Right ventricle myocardium inferior (tissue), 1 donor: ENCODE measurements at regions of chr11 and their contacts with region 1.

Region 1: GRCh38 chr11:88421530-88421929 is 84.0 kb upstream of the CTSC start:
- DNase-seq: no peak
- ATAC-seq: peak; percentile 47

Region 2: DNA sequence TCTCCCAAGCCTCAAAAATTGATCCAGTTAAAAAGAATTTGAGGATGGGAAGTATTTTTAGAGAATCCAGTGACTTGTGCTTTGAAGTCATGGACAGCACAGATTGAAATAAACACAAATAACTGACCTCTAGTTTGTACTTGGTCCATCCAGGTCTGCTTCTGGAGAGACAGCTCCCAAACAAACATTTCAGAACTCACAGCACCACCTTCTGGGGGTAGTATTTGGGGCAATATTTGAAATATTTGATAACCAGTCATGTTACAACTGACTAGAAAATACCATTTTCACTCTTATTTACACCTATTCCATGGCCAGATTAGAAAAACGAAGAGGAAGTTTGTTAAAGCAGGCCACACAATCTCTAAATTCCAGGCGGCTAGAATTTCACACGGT is 140.2 kb before region 1 on chr11:
- intact Hi-C with region 1: loop called (anchors 5 kb)
- DNase-seq: no peak
- ATAC-seq: no peak